Right ventricle myocardium inferior (tissue), 1 donor: ENCODE measurements at regions of chr18 and their contacts with region 1.

Region 1: GRCh38 chr18:6885992-6886796 is 156.7 kb downstream of the ARHGAP28 start:
- DNase-seq: no peak
- ATAC-seq: peak; percentile 71

Region 2: GRCh38 chr18:5806860-5807259 is 1079.3 kb before region 1 on chr18:
- intact Hi-C with region 1: no loop called
- DNase-seq: no peak
- ATAC-seq: no peak

Region 3: GRCh38 chr18:5868218-5869115 is 1017.7 kb before region 1 on chr18:
- intact Hi-C with region 1: loop called (anchors 5 kb)
- DNase-seq: no peak
- ATAC-seq: peak; percentile 88

Region 4: DNA sequence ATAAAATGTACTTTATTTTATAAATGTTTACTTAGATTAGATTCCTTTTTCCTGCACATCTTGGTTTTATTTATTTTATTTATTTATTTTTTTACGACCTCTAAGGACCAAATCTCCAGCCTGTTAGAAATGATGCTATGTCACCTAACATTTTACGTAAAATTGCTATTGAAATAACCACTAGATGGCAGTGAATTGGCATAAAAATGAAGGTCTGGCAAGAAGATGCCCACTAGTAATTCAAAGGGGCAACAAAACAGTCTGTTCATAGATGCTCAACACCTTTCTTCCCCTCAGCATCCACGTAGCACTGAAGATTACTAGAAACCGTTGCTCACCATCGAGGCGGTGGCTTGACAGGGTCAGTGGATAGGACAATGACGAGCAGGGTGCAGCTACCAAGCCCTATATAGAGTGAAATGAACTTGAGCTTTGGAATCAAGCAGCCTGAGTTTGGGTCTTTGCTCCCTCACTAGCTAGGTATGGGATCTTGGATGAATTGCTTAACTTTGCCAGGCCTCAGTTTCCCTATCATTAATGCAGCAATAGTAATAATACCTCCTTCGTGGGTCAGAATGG is 342.8 kb before region 1 on chr18:
- intact Hi-C with region 1: loop called (anchors 2 kb)
- DNase-seq: no peak
- ATAC-seq: no peak

Region 5: DNA sequence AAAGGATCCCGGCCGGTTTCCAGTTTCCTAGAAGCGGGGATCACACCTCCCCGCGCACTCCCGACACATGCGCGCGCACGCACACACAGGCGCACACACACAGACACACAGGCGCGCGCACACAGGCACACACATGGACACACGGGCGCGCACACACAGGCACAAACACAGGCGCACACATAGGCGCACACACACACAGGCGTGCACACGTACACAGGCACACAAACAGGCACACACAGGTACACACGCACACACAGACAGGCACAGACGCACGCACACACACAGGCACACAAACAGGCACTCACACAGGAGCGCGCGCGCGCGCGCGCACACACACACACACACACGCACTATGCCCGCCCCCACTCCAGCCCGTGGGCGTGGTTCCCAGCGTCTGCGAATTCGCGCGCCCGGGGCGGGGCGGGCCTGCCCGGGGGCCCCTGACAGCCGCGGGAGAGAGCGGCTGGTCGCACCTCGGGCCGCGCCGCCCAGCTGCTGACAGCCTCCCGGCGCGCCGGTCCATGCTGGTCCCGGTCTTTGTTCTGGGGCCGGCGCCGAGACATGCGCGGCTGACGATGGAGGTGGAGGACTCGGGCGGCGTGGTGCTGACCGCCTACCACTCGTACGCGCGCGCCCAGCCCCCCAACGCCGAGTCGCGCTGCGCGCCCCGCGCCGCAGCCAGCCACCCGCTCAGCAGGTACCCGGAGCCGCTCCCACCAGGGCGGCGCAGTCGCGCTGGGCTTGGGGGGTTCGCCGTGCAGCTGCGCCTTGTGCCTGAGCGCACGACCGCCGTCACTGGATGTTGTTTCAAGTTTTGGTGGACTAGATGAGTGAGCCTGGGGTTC is 156.7 kb before region 1 on chr18 and contains the start of gene ARHGAP28:
- intact Hi-C with region 1: loop called (anchors 5 kb)
- DNase-seq: peak; percentile 91
- ATAC-seq: peak; percentile 95
- total RNA-seq, gene ARHGAP28: 1.1 TPM

Region 6: DNA sequence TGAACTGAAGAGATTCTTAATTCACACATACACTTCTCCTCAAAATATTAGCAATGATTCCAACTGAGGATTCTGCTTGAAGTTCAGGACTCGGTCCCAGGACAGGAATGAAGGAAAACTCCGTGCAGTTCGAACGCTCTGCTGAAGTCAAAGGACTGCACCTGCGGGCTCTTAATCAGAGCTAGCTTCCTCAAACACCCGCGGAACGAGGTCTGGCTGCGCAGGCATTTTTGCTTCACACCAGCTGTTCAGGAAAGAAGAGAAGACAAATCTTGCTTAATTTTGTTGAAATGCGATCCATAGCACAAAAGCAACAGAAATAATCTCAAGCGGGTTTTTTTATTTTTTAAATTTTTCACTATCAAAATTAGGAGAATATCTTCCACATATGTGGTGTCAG is 55.8 kb after region 1 on chr18:
- intact Hi-C with region 1: no loop called
- DNase-seq: no peak
- ATAC-seq: no peak